Naive thymus-derived CD4-positive, alpha-beta T cell (primary cell): ENCODE measurements at regions of chr12 and their contacts with region 1.

Region 1: DNA sequence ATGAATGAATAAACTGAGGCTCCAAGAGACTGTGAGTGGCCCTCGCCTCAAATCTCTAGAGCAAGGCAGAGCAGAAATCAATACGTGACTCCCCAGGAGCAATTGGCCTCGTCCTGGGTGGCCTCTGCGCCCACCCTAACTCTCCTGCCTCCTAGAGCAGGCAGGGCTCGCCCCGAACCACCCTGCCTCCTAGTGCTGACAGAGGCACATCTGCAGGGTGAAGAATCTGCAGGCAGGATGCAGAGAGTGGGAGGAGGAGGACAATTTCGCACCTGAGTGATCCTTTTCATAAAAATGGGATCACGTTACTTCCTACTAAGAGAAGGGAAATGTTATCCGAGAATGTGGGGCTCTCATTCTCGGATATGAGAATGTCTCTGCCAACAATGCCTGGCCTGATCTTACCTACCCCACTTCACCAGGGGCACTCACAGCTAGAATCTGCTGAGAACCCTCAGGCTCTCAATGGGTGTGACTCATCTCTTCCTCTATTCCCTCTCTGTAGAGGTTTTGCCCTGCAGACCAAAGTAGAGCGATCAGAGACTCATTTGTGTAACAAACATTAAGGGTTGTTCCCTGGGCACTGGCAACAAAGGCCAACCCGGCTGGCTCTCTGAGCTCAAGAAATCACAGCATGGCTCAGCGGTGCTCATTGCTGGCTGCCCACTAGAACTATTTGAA is 61.7 kb upstream of the BCL2L14 start:
- DNase-seq: peak in 7 of 9 donors; percentile 31 to 67 (median 36)
- ATAC-seq: peak; percentile 67
- H3K4me3 ChIP-seq: peak overlapping the region; percentile 15
- H3K4me3 Mint-ChIP-seq: peak overlapping the region; percentile 74 to 88 (median 82)
- H3K27ac ChIP-seq: peak overlapping the region; percentile 16
- H3K27ac Mint-ChIP-seq: peak overlapping the region; percentile 83 to 96 (median 90)
- H3K4me1 ChIP-seq: peaks cover 44 to 53% of the 10 kb centered on the region in 2 donors
- H3K4me1 Mint-ChIP-seq: peaks cover 53 to 88% (median 81%) of the 10 kb centered on the region in 7 donors
- H3K27me3 ChIP-seq: no peaks in the 10 kb centered on the region
- H3K27me3 Mint-ChIP-seq: peaks cover 0 to 9% (median 0%) of the 10 kb centered on the region in 5 donors

Region 2: DNA sequence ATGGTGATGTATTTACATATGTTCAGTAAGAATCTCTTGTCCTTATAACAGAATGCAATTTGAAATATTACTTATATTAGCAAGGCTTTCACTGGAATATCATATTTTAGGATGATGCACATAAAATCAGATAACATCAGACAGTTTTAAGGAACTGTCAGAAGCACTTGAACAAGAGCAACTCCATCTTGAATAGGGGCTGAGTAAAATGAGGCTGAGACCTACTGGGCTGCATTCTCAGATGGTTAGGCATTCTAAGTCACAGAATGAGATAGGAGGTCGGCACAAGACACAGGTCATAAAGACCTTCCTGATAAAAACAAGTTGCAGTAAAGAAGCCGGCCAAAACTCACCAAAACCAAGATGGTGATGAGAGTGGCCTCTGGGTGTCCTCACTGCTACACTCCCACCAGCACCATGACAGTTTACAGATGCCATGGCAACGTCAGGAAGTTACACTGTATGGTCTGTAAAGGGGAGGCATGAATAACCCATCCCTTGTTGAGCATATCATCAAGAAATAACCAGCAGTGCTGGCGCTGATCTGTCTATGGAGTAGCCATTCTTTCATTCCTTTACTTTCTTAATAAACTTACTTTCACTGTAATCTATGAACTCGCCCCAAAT is 387.2 kb before region 1 on chr12:
- CTCF ChIA-PET with region 1: no interaction called
- POLR2A ChIA-PET with region 1: no interaction called
- intact Hi-C with region 1: loop called in 1 of 2 experiments (anchors 1 kb)
- DNase-seq: peak in 6 of 9 donors; percentile 8 to 43 (median 28)
- ATAC-seq: no peak
- H3K4me3 ChIP-seq: no peak overlapping the region
- H3K4me3 Mint-ChIP-seq: no peak overlapping the region
- H3K27ac ChIP-seq: no peak overlapping the region
- H3K27ac Mint-ChIP-seq: peak overlapping the region in 1 of 9 donors; percentile 26
- H3K4me1 ChIP-seq: no peaks in the 10 kb centered on the region
- H3K4me1 Mint-ChIP-seq: peaks cover 0 to 10% (median 0%) of the 10 kb centered on the region in 7 donors
- H3K27me3 ChIP-seq: no peaks in the 10 kb centered on the region
- H3K27me3 Mint-ChIP-seq: no peaks in the 10 kb centered on the region

Region 3: DNA sequence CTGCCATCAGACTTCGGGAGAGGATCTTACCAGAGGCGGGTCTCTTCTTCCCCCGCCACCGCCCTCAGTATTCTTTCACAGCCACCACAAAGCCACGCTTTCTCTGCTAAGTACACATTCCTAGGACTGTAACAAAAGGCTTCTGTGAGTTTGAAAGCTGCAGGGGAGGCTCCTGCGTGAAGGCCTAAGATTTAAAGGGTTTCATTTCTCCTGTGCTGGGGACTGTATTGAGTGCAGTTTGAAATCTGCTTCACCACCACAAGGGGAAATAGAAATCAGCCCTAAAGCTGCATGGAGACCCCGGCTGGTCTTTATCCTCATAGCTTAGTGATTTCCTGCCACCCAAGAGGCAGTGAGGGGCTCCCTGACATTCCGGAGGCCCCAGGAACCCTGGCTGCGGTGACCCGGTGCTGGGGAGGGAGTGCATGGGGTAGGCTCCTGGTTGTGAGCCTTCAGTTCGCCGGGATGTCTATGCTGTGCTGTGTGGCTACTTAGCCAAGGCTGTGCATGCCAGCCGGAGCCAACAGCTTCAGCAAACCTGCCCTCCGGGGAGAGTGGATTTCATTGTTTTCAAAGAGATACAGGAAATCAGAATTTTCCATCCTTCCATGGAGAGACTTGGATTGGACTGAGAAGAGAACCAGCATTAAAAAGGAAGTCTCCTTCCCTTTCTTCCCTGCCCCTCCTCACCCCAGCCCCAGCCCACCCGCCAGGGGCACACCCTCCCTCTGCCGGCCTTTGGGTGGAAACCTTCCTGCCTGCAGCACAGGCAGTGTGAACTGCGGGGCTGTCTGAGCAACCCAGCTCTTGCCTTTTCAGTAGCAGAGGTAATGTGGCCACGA is 196.3 kb before region 1 on chr12:
- CTCF ChIA-PET with region 1: no interaction called
- POLR2A ChIA-PET with region 1: interaction called, 3 read pairs
- intact Hi-C with region 1: loop called (anchors 5 to 10 kb)
- DNase-seq: peak in 7 of 9 donors; percentile 5 to 42 (median 27)
- ATAC-seq: peak; percentile 79
- H3K4me3 ChIP-seq: no peak overlapping the region
- H3K4me3 Mint-ChIP-seq: peak overlapping the region; percentile 61 to 81 (median 74)
- H3K27ac ChIP-seq: peak overlapping the region; percentile 50
- H3K27ac Mint-ChIP-seq: peak overlapping the region; percentile 76 to 93 (median 88)
- H3K4me1 ChIP-seq: peaks cover 0 to 10% of the 10 kb centered on the region in 2 donors
- H3K4me1 Mint-ChIP-seq: peaks cover 35 to 66% (median 51%) of the 10 kb centered on the region in 7 donors
- H3K27me3 ChIP-seq: no peaks in the 10 kb centered on the region
- H3K27me3 Mint-ChIP-seq: no peaks in the 10 kb centered on the region

Region 4: GRCh38 chr12:11901701-11902524 is 107.2 kb before region 1 on chr12:
- CTCF ChIA-PET with region 1: no interaction called
- POLR2A ChIA-PET with region 1: no interaction called
- intact Hi-C with region 1: loop called in 1 of 2 experiments (anchors 1 kb)
- DNase-seq: peak in 1 of 9 donors; percentile 79
- ATAC-seq: no peak
- H3K4me3 ChIP-seq: no peak overlapping the region
- H3K4me3 Mint-ChIP-seq: peak overlapping the region in 8 of 10 donors; percentile 10 to 71 (median 36)
- H3K27ac ChIP-seq: no peak overlapping the region
- H3K27ac Mint-ChIP-seq: peak overlapping the region in 3 of 9 donors; percentile 29 to 73 (median 71)
- H3K4me1 ChIP-seq: peaks cover 0 to 6% of the 10 kb centered on the region in 2 donors
- H3K4me1 Mint-ChIP-seq: peaks cover 17 to 60% (median 44%) of the 10 kb centered on the region in 7 donors
- H3K27me3 ChIP-seq: no peaks in the 10 kb centered on the region
- H3K27me3 Mint-ChIP-seq: no peaks in the 10 kb centered on the region

Region 5: DNA sequence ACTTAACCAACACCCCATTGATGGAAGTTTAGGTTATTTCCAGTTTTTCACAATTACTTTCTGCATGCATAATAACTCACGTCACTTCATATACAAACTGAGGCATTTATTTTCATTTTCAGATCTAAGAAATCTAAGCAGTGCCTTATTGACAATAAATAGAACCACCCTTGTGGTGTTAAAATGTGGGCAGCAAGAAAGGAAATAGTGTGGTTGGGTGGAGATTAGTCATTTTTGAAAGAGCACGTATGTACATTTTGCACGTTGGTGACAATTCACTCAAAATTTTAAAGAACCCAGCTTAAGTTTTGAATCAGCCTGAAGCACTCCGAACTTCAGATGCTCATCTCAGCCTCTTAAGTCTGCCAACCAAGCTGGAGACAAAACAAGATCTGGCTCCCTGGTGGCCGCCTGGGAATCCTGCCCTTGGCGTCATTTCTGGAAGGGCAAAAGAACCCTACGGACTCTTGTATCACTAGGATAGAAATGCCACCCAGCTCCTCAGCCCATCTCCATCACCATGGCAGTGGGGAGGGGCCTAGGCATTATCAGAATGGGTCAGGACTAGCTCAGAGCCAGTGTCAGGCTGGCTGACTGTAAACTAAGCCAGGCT is 27.8 kb before region 1 on chr12:
- CTCF ChIA-PET with region 1: no interaction called
- POLR2A ChIA-PET with region 1: interaction called, 6 read pairs
- intact Hi-C with region 1: loop called (anchors 1 kb)
- DNase-seq: peak; percentile 12 to 87 (median 75)
- ATAC-seq: peak; percentile 95
- H3K4me3 ChIP-seq: peak overlapping the region; percentile 2
- H3K4me3 Mint-ChIP-seq: peak overlapping the region; percentile 2 to 71 (median 56)
- H3K27ac ChIP-seq: peak overlapping the region; percentile 52
- H3K27ac Mint-ChIP-seq: peak overlapping the region; percentile 66 to 98 (median 82)
- H3K4me1 ChIP-seq: peaks cover 23 to 28% of the 10 kb centered on the region in 2 donors
- H3K4me1 Mint-ChIP-seq: peaks cover 26 to 69% (median 48%) of the 10 kb centered on the region in 7 donors
- H3K27me3 ChIP-seq: no peaks in the 10 kb centered on the region
- H3K27me3 Mint-ChIP-seq: peaks cover 0 to 2% (median 0%) of the 10 kb centered on the region in 5 donors

Region 6: DNA sequence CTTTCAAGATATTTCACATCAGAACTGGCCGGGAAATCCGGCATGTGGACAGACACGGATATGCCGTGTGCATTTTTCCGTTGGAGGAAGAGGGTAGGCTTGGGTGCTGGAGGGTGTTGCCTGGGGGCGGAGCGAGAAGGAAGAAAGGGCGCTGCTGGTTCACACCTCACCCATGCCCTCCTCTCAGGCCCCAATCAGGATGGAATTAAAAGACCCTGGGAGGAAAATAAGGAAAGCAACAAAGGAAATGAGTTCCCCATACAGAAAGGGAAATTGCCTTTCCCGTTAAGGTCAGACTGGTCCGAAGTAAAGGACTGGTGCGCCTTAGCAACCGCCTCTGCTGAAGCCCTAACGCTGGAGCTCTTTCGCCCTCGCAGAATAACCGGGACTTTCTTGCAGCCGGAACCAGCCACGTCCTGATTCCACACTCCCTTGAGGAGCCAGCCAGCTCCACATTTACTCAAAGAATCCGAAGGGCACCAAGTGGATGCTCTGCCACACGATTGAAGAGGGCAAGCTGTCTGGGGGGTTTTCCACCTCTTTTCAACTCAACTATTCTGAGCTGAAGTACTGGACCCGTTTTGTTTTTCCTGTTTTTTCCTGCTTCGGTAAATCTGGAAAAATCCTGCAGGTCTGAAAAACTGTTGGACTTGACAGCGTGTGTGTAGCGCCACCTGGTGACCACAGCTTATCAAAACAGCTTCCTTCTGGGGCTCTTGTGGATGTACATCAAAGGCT is 23.9 kb after region 1 on chr12:
- CTCF ChIA-PET with region 1: interaction called, 11 read pairs
- POLR2A ChIA-PET with region 1: interaction called, 5 read pairs
- intact Hi-C with region 1: loop called (anchors 1 kb)
- DNase-seq: peak; percentile 46 to 79 (median 65)
- ATAC-seq: peak; percentile 82
- H3K4me3 ChIP-seq: peak overlapping the region; percentile 63
- H3K4me3 Mint-ChIP-seq: peak overlapping the region; percentile 75 to 87 (median 82)
- H3K27ac ChIP-seq: no peak overlapping the region
- H3K27ac Mint-ChIP-seq: peak overlapping the region; percentile 18 to 91 (median 72)
- H3K4me1 ChIP-seq: peaks cover 9 to 13% of the 10 kb centered on the region in 2 donors
- H3K4me1 Mint-ChIP-seq: peaks cover 14 to 50% (median 17%) of the 10 kb centered on the region in 7 donors
- H3K27me3 ChIP-seq: no peaks in the 10 kb centered on the region
- H3K27me3 Mint-ChIP-seq: no peaks in the 10 kb centered on the region

Region 7: DNA sequence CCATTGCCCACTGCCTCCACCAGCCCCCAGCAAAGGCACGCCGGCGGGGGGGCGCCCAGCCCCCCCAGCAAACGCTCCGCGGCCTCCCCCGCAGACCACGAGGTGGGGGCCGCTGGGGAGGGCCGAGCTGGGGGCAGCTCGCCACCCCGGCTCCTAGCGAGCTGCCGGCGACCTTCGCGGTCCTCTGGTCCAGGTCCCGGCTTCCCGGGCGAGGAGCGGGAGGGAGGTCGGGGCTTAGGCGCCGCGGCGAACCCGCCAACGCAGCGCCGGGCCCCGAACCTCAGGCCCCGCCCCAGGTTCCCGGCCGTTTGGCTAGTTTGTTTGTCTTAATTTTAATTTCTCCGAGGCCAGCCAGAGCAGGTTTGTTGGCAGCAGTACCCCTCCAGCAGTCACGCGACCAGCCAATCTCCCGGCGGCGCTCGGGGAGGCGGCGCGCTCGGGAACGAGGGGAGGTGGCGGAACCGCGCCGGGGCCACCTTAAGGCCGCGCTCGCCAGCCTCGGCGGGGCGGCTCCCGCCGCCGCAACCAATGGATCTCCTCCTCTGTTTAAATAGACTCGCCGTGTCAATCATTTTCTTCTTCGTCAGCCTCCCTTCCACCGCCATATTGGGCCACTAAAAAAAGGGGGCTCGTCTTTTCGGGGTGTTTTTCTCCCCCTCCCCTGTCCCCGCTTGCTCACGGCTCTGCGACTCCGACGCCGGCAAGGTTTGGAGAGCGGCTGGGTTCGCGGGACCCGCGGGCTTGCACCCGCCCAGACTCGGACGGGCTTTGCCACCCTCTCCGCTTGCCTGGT is 707.9 kb after region 1 on chr12 and contains the start of gene CDKN1B:
- CTCF ChIA-PET with region 1: no interaction called
- POLR2A ChIA-PET with region 1: no interaction called
- intact Hi-C with region 1: loop called (anchors 5 to 10 kb)
- DNase-seq: peak; percentile 68 to 91 (median 87)
- ATAC-seq: peak; percentile 77
- H3K4me3 ChIP-seq: peak within 1 kb of the TSS; percentile 94
- H3K4me3 Mint-ChIP-seq: peak within 1 kb of the TSS; percentile 87 to 100 (median 98)
- H3K27ac ChIP-seq: peak within 1 kb of the TSS; percentile 99
- H3K27ac Mint-ChIP-seq: peak within 1 kb of the TSS; percentile 97 to 99 (median 99)
- H3K4me1 ChIP-seq: peaks cover 24 to 39% of the 10 kb centered on the region in 2 donors
- H3K4me1 Mint-ChIP-seq: peaks cover 43 to 66% (median 55%) of the 10 kb centered on the region in 7 donors
- H3K27me3 ChIP-seq: no peaks in the 10 kb centered on the region
- H3K27me3 Mint-ChIP-seq: no peaks in the 10 kb centered on the region
- total RNA-seq, gene CDKN1B: 105 to 205 (median 191) TPM